Right ventricle myocardium inferior (tissue), 1 donor: ENCODE measurements at regions of chr3 and their contacts with region 1.

Region 1: GRCh38 chr3:149129326-149130205 is at the start of gene HPS3:
- DNase-seq: peak; percentile 98
- ATAC-seq: peak; percentile 98
- total RNA-seq, gene HPS3: 5.3 TPM

Region 2: GRCh38 chr3:149163066-149163465 is 33.5 kb after region 1 on chr3:
- intact Hi-C with region 1: loop called (anchors 5 kb)
- DNase-seq: no peak
- ATAC-seq: no peak